ENCODE measurements at regions of chr1 and their contacts with region 1.

Region 1: GRCh38 chr1:9942939-9943788 is at the starts of genes LZIC and NMNAT1:
- DNase-seq: peak; percentile 98
- ATAC-seq: peak; percentile 99
- H3K4me3 ChIP-seq: peak within 1 kb of the TSS; percentile 80
- H3K27ac ChIP-seq: peak within 1 kb of the TSS; percentile 88
- H3K4me1 ChIP-seq: peaks cover 4 to 5% of the 10 kb centered on the region in 2 experiments; a peak in 3 of 5 replicates
- H3K27me3 ChIP-seq: no peaks in the 10 kb centered on the region
- CTCF ChIP-seq: no peak; a peak in 1 of 6 replicates
- EP300 ChIP-seq: peak; percentile 48
- POLR2A ChIP-seq: peak; percentile 98
- RAD21 ChIP-seq: no peak; a peak in 1 of 4 replicates
- polyA plus RNA-seq, gene LZIC: 101 to 109 TPM
- polyA plus RNA-seq, gene NMNAT1: 12.1 to 13.3 TPM

Region 2: DNA sequence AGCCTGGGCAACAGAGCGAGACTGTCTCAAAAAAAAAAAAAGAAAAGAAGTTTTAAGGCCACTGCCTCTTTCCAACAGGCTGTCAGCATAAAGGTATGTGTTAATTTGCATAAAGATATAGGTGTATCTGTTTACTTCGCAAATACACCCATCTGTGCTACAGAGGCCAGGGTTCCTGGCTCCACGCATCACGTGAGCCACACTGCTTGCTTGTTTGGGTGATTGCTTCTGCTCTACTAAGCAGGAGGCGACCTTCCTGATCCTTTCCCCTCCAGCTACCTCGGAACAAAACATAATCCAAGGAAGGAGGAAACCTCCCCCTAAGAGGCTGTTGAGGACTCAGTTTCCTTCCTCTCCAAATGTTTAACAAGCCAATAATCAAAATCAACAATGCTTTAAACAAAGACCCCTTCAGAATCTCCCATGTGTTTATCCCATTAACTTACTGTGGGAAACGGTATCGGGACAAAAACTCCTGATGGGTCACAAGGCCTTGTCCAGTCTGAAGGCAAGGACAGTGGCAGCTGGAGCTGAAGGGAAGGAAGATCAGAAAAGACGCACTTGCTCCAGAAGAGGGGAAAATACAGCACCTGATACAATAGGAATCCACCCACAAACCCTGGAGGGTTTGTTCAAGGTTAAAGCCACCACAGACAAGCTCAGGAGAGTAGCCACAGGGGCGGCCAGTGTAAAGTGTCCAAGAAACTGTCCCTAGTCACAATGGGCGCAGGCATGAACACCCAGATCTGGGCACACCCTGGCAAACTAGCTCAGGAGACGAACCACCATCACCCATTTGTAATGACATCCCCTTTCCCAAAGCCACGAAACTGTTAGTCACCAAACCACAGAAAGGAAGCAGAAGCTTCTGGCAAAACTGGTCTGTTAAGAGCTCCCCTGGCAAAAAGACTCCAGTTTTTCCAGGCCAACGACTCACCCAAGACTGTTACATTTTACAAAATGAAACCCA is 50.3 kb before region 1 on chr1:
- CTCF ChIA-PET with region 1: interaction called, 3 read pairs
- POLR2A ChIA-PET with region 1: interaction called, 11 read pairs
- in situ Hi-C with region 1: no loop called
- intact Hi-C with region 1: no loop called
- DNase-seq: no peak
- ATAC-seq: no peak
- H3K4me3 ChIP-seq: no peak overlapping the region
- H3K27ac ChIP-seq: no peak overlapping the region
- H3K4me1 ChIP-seq: peaks cover 0 to 9% of the 10 kb centered on the region in 2 experiments; a peak in 2 of 5 replicates
- H3K27me3 ChIP-seq: no peaks in the 10 kb centered on the region
- CTCF ChIP-seq: no peak
- EP300 ChIP-seq: no peak
- POLR2A ChIP-seq: no peak
- RAD21 ChIP-seq: no peak

Region 3: DNA sequence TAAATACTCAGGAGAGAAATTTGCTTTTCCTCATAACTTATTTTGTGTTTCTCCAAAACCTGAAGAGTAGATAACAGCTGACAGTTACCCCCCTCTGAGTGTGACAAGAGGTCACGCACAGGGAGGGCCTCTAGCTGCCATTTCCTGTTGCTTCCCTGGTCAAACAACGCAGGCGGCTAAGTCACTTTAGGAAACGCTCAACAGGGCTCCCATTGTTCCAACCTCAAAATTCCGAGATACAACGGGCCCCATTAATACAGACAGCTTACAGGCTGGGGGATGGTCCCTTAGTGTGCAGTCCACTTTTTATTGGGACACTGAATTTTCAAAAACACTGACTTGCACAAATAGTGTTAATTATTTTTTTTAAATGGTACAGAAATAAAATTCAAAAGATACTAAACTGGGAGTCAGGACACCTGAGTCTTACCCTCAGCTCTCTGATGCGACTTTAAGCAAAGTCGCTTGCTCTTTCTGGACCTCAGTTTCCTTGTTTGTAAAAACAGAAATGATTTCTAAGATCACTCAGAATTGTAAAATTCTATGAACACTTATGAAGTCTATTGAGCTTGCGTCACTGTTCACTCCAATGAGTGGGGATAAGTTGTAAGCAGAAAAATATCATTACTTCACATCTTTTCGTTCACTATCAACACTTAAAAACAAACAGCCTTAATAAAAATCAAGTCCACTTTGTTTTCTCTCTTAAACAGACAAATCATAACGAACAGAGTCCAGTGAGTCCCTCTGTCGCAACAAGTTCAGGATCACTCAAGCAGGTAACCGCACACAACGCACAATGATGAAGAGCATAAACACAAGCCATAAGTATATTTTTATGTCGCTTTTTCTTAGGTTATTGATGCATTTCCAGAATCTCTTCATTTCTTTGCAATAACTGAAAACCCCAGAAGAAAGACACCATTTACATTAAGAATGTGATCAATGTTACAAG is 13.5 kb before region 1 on chr1:
- CTCF ChIA-PET with region 1: interaction called, 3 read pairs
- POLR2A ChIA-PET with region 1: interaction called, 14 read pairs
- in situ Hi-C with region 1: no loop called
- intact Hi-C with region 1: no loop called
- DNase-seq: peak; percentile 63 to 91 (median 78)
- ATAC-seq: peak; percentile 96
- H3K4me3 ChIP-seq: no peak overlapping the region; the same call in 1 of the 2 replicates
- H3K27ac ChIP-seq: peak overlapping the region; percentile 86
- H3K4me1 ChIP-seq: peaks cover 11 to 18% of the 10 kb centered on the region in 2 experiments; a peak in 4 of 5 replicates
- H3K27me3 ChIP-seq: no peaks in the 10 kb centered on the region
- CTCF ChIP-seq: no peak
- EP300 ChIP-seq: peak; percentile 89
- POLR2A ChIP-seq: peak; percentile 69
- RAD21 ChIP-seq: peak; percentile 12 to 22; a peak in 2 of 4 replicates

Region 4: GRCh38 chr1:10032590-10033358 is 89.6 kb after region 1 on chr1 and contains the start of gene UBE4B:
- CTCF ChIA-PET with region 1: interaction called, 4 read pairs
- POLR2A ChIA-PET with region 1: interaction called, 10 read pairs
- in situ Hi-C with region 1: no loop called
- intact Hi-C with region 1: loop called (anchors 1 kb)
- DNase-seq: peak; percentile 98 to 99 (median 99)
- ATAC-seq: peak; percentile 93
- H3K4me3 ChIP-seq: peak within 1 kb of the TSS; percentile 62
- H3K27ac ChIP-seq: peak within 1 kb of the TSS; percentile 97
- H3K4me1 ChIP-seq: peaks cover 3 to 14% of the 10 kb centered on the region in 2 experiments; a peak in 2 of 5 replicates
- H3K27me3 ChIP-seq: no peaks in the 10 kb centered on the region
- CTCF ChIP-seq: peak; percentile 91 to 98 (median 95)
- EP300 ChIP-seq: peak; percentile 53; the same call in 1 of the 2 replicates
- POLR2A ChIP-seq: peak; percentile 89
- RAD21 ChIP-seq: peak; percentile 81 to 84
- polyA plus RNA-seq, gene UBE4B: 11.7 to 24.9 TPM

Measured in K562 (cell line).